ENCODE measurements at regions of chr16 and their contacts with region 1.

Region 1: DNA sequence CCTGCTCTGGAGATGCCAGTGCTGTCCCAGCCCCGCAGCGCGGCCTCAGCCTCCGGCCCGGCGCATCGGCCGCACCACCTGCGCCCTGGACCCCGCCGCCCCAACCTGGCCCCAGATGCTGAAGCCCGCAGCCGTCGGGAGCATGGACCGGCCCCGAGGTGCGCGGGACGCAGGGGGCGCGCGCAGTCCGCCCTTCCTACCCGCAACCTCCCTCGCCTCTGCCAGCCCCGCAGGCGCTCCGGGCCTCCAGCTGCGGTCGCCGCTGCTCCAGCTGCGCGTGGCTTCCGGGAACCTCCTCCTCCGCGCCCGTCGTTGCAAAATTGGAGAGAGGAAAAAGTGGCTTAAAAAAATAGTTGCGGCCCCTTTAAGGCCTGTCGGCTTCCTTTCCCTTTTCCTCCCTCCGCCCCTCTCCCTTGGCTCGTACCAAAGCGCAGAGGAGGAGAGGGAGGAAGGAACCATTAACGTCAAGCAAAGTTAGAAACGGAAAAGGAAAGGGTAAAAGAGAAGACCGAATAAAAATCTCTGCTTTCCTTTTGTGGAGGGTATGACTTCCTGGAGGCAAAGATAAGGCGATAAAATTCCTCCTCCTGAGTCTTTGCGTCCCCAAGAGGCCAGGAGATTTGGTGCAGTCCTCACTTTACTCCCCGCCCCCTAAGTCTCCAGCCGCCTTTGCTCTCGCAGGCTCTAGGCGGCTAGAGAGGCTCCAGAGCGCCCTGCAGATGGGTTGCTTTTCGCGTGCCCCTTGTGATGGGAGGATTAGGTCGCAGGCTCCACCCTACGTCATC is at the start of gene CDIPT:
- DNase-seq: peak; percentile 98
- H3K4me3 Mint-ChIP-seq: peak within 1 kb of the TSS; percentile 96
- H3K27ac Mint-ChIP-seq: peak within 1 kb of the TSS; percentile 98
- H3K4me1 Mint-ChIP-seq: peaks cover 25% of the 10 kb centered on the region
- H3K27me3 Mint-ChIP-seq: no peaks in the 10 kb centered on the region
- total RNA-seq, gene CDIPT: 69.2 and 71.2 TPM in 2 replicates

Region 2: GRCh38 chr16:28193530-28194423 is 1669.3 kb before region 1 on chr16:
- intact Hi-C with region 1: no loop called
- DNase-seq: peak; percentile 78
- H3K4me3 Mint-ChIP-seq: peak overlapping the region; percentile 87
- H3K27ac Mint-ChIP-seq: peak overlapping the region; percentile 96
- H3K4me1 Mint-ChIP-seq: peaks cover 75% of the 10 kb centered on the region
- H3K27me3 Mint-ChIP-seq: no peaks in the 10 kb centered on the region

Region 3: DNA sequence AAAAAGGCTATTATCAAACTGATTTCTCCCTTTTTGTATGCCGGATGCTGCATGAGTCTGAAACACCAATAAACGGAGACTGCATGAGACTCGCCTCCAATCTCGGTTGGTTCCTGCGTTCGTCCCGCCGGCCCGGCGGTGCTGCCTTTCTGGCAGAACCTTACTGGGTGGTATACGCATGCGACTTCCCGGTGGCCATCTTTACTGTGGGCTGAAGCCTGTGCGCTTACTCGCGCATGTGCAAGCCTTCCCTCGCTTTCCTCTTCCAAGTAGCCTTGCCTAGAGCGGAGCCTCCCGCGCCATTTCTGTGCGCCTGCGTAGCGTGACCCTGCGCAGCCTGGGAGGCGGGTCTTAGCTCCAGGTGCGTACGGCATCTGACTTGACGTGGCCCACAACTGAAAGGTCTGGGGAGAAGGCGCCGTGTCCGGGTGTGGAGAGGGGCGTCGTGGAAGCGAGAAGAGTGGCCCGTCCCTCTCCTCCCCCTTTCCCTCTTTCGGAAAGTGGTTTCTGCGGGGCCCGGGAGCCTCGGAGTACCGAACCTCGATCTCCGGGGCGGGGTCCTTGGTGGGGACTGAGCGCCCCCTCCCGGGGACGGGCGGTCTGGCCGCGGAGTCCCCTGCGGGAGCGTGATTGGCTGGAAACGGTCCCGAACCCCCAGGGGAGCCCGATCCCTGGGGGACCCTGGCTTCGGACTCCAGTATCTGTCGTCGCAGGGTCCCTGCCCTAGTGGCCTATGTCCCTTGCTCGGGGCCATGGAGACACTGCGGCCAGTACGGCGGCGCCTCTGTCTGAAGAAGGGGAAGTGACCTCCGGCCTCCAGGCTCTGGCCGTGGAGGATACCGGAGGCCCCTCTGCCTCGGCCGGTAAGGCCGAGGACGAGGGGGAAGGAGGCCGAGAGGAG is 47.0 kb before region 1 on chr16 and contains the start of gene PAGR1:
- intact Hi-C with region 1: loop called (anchors 1 kb)
- DNase-seq: peak; percentile 100
- H3K4me3 Mint-ChIP-seq: peak within 1 kb of the TSS; percentile 91
- H3K27ac Mint-ChIP-seq: peak within 1 kb of the TSS; percentile 94
- H3K4me1 Mint-ChIP-seq: peaks cover 62% of the 10 kb centered on the region
- H3K27me3 Mint-ChIP-seq: peaks cover 6% of the 10 kb centered on the region
- total RNA-seq, gene PAGR1: 25.8 and 27.0 TPM in 2 replicates

Region 4: DNA sequence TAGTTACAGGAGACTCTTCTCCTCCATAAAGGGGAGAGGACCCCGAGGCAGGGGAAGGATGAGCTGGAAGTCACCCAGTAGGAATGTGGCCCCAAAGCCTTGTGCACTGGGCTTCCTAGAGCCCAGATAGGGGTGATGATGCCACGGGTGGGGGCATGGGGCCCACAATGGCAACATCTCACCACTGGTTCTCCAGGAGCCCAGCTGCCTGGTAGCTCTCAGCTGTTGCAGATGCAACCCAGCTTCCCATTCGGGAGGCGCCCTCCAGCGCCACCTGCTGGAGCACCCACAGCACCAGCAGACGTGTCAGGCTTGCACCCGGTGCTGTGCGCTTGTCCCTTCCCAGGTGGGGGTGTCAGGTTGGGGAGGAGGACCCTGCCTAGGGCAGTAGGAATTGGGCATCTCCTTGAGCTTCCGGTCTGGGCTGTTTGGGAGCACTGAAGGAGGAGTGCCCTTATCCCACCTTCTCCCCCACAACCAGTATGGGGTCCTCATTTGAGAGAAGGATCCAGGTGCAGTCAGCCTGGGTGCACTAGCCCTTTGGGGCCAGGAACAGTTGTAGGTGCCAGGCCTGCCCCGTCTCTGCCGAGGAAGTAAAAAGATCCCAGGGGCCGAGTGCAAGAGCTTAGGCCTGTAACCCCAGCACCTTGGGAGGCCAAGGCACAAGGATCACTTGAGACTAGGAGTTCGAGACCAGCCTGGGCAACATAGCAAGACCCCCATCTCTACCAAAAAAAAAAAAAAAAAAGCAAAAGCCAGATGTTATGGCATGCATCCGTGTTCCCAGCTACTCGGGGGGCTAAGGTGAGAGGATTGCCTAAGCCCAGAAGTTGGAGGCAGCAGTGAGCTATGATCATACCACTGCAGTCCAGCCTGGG is 14.4 kb before region 1 on chr16:
- intact Hi-C with region 1: no loop called
- DNase-seq: peak; percentile 95
- H3K4me3 Mint-ChIP-seq: no peak overlapping the region
- H3K27ac Mint-ChIP-seq: no peak overlapping the region
- H3K4me1 Mint-ChIP-seq: peaks cover 2% of the 10 kb centered on the region
- H3K27me3 Mint-ChIP-seq: no peaks in the 10 kb centered on the region

Region 5: GRCh38 chr16:29877266-29877961 is 14.3 kb after region 1 on chr16:
- intact Hi-C with region 1: no loop called
- DNase-seq: peak; percentile 86
- H3K4me3 Mint-ChIP-seq: peak overlapping the region; percentile 76
- H3K27ac Mint-ChIP-seq: no peak overlapping the region
- H3K4me1 Mint-ChIP-seq: peaks cover 13% of the 10 kb centered on the region
- H3K27me3 Mint-ChIP-seq: peaks cover 24% of the 10 kb centered on the region

Region 6: DNA sequence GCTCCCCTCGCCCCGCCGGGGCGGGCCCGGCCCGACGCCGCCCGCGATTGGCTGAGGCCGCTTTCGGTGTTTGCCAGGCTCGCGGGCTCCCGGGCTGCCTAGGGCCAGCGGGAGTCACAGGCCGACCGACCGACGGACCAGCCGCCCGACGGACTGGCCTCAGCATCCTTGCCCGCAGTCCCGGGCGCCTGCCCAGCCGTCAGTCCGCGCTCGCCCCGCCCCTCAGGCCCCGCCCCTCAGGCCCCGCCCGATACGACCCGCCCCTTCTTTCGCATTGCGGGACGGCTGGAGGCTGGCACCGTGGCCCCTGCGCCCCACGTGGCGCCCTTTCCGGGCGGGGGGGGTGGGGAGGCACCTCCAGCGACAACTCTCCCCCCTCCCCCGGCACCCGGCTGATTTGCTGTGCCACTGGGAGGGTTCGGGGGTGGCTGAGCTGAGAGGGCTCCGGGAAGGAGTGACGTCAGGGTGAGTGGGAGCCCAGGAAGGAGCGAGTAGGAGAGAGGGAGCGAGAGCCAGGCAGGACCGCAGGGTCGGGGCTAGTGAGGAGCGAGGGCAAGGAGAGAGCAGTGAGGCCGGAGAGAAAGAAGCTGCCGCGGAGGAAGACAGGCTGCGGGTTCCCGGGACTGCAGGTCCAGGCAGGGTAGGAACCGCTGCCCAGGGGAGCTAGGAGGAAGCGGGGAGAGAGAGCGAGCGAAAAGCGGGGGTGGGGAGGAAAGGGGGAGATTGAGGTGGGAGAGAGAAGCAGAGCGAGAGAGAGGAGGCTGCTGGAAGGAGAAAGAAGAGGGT is 37.2 kb after region 1 on chr16 and contains the start of gene ASPHD1:
- intact Hi-C with region 1: loop called (anchors 1 kb)
- DNase-seq: no peak
- H3K4me3 Mint-ChIP-seq: peak within 1 kb of the TSS; percentile 93
- H3K27ac Mint-ChIP-seq: peak within 1 kb of the TSS; percentile 85
- H3K4me1 Mint-ChIP-seq: peaks cover 12% of the 10 kb centered on the region
- H3K27me3 Mint-ChIP-seq: peaks cover 40% of the 10 kb centered on the region
- total RNA-seq, gene ASPHD1: 4.4 and 4.8 TPM in 2 replicates

Region 7: DNA sequence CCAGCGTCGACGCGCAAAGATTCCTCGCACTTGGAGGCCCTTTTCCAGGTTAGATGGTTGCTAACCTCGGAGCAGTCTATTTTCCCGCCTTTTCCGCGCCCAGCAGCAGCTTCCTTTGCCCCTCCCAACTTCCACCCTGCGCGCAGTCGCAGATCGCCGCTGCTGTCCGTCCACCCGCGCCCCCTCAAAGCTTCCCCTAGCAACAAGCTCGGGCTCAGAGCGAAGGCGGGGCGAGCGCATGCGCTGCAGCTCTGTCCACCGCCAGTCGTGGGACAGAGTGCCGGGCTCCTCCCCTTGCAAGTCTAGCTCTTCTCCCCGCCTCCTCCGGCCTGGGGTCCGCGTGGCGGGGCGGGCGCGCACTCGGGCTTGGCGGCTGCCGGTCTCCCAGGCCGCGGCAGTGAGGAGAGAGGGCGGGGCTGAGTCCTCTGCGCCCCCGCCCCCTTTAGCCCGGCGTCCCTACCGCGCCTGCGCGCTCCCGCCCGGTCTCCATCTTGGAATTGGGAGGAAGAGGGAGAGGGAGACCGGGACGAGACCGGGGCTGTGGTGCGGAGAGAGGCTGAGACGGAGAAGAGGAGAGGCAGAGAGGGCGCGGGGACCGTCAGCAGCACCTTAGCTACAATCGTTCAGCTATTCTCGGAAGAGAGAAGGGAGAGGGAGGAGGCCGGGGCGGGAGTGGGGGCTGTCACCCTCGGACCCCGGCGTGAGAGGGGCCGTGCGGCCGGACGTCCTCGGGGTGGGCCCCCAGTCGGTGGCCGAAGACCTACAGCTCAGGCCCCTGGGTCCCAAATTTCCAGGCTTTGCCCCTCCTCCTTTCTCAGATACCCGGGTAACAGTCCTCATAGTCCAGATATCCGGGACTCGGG is 110.5 kb after region 1 on chr16 and contains the start of gene TAOK2:
- intact Hi-C with region 1: loop called (anchors 10 kb)
- DNase-seq: peak; percentile 99
- H3K4me3 Mint-ChIP-seq: peak within 1 kb of the TSS; percentile 91
- H3K27ac Mint-ChIP-seq: peak within 1 kb of the TSS; percentile 95
- H3K4me1 Mint-ChIP-seq: peaks cover 30% of the 10 kb centered on the region
- H3K27me3 Mint-ChIP-seq: no peaks in the 10 kb centered on the region
- total RNA-seq, gene TAOK2: 35.8 and 38.7 TPM in 2 replicates